HepG2 (cell line): ENCODE measurements at regions of chr10 and their contacts with region 1.

Region 1: DNA sequence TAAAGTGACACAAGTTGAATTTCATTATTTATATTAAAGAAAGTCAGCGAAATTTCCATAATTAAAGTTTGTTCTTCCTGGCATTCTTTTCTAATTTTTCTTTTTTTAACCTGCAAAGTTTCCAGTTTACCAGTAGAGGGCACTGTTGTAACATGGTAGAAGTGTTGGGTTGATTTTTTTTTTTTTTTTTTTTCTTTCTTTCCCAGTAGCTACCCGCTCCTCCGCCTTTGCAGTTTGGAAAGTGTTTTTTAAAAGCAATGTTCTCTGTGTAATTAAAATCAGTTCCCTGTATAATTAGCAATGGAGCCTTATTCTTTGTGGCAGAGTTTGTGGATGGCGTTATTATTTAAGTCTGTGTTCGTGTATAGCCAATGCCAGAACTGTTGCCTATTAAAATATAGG is 53.7 kb downstream of the TAF3 start:
- DNase-seq: no peak
- ATAC-seq: no peak
- H3K4me3 ChIP-seq: no peak overlapping the region
- H3K27ac ChIP-seq: no peak overlapping the region
- H3K4me1 ChIP-seq: no peaks in the 10 kb centered on the region
- H3K27me3 ChIP-seq: no peaks in the 10 kb centered on the region
- CTCF ChIP-seq: peak; percentile 57
- EP300 ChIP-seq: no peak
- POLR2A ChIP-seq: no peak
- RAD21 ChIP-seq: peak; percentile 47; the same call in 1 of the 2 replicates

Region 2: GRCh38 chr10:7836571-7836970 is 35.5 kb before region 1 on chr10:
- CTCF ChIA-PET with region 1: no interaction called
- POLR2A ChIA-PET with region 1: no interaction called
- in situ Hi-C with region 1: no loop called
- intact Hi-C with region 1: no loop called
- DNase-seq: no peak
- ATAC-seq: no peak
- H3K4me3 ChIP-seq: no peak overlapping the region
- H3K27ac ChIP-seq: no peak overlapping the region
- H3K4me1 ChIP-seq: no peaks in the 10 kb centered on the region
- H3K27me3 ChIP-seq: no peaks in the 10 kb centered on the region; a peak in 1 of 5 replicates
- CTCF ChIP-seq: no peak
- EP300 ChIP-seq: no peak
- POLR2A ChIP-seq: no peak
- RAD21 ChIP-seq: no peak

Region 3: DNA sequence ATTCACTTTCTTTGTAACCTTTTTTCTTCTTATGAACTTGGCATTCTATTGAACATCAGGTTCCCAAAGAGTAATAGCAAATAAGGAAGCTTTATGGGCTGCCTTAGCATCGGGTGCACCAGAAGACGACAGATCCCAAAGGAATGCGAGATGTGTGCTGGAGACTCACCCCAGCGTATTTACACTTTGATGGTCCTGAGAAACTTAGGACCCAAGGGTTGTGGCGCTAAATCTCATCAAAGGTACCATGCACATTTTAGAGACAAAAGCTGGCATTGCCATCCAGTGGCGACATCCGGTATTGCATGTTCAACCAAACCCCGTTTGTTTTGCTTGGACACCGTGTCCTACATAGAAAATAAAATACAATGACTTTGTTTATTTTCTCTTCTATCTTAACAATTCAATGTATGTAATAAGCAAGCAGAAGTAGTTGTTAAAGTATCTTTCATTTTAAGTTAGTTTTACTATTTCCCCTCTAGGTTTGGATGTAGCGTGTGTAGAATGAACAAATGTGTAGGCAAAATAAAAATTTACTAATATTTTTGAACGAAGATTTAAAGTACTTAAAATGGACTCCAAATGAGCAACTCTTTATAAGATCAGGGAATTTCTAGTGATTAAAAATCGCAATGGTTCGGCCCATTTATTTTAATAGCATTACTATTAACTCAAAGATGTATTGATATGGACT is 1337.2 kb after region 1 on chr10:
- CTCF ChIA-PET with region 1: interaction called, 10 read pairs
- POLR2A ChIA-PET with region 1: no interaction called
- in situ Hi-C with region 1: loop called (anchors 10 kb)
- intact Hi-C with region 1: loop called (anchors 1 kb)
- DNase-seq: peak; percentile 38
- ATAC-seq: peak; percentile 61
- H3K4me3 ChIP-seq: no peak overlapping the region
- H3K27ac ChIP-seq: no peak overlapping the region
- H3K4me1 ChIP-seq: no peaks in the 10 kb centered on the region
- H3K27me3 ChIP-seq: no peaks in the 10 kb centered on the region
- CTCF ChIP-seq: peak; percentile 81
- EP300 ChIP-seq: no peak
- POLR2A ChIP-seq: no peak
- RAD21 ChIP-seq: peak; percentile 32; the same call in 1 of the 2 replicates